ENCODE measurements at regions of chr9 and their contacts with region 1.

Region 1: DNA sequence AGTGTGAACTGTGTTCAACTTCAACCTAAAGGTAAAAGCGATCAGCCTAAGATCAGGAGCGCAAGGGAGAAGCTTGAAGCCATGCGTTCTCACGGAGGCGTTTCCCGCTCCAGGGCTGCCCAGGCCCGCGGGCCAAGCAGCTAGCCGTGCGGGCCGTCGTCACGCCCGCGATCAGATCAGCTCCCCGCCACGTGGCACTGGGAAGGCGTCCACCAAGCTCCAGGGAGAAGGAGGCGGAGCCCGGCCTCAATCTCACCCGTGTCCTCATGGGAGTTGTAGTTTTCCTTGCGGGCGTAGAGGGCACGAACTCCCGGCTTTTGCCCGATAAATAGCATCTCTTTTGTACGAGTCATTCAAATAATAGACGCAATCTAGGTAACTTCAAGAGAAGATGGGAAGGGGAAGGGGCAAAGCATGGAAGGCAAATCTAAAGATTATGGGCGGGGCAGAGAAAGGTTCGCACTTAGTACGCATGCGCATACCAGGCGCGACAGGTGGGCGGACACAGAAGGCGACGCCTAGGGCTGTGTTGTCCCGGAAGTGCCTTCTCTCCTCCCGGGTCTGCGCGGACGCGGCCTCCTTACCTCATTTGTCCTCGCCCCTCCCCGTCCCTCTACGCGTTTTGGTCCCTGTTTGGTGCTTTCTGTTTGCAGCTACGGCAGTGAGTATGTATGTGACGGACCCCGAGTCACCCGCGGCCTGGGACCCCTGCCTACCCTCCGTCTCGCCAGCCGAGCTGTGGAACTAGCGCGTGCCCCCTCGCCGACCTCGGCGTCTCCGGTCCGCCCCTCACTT is 40.8 kb upstream of the ZCCHC7 start:
- DNase-seq: peak; percentile 93
- ATAC-seq: peak; percentile 93
- H3K4me3 ChIP-seq: peak overlapping the region; percentile 84
- H3K27ac ChIP-seq: peak overlapping the region; percentile 87
- H3K4me1 ChIP-seq: peaks cover 20% of the 10 kb centered on the region
- H3K27me3 ChIP-seq: no peaks in the 10 kb centered on the region
- CTCF ChIP-seq: no peak
- EP300 ChIP-seq: no peak
- POLR2A ChIP-seq: peak; percentile 89
- RAD21 ChIP-seq: no peak

Region 2: DNA sequence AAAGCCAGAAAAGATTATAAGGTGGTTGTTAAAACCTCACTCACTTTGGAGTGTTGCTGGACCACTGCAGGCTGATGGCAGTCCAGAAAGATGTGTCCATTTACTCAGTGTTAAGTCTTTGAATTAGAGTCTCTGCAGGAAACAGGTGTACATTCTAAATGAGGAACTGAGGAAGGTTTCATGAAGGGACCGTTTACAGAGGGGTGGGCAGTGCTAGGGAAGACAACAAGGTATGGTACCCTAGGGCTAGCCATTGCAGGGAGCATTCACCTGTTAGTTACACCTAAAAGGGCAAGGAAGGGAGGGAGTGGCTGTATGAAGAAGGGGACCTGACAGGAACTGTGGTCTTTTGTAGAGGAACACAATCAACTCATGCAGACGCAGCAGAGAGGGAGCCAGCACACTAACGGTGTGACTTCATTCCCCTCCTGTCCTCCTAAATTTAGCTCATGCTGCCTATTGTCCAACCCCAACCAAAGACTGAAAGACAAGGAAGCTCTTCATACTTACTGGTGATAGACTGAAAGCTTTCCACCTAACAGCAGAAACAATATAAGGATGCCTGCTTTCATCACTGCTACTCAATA is 13.3 kb before region 1 on chr9:
- CTCF ChIA-PET with region 1: interaction called, 4 read pairs
- POLR2A ChIA-PET with region 1: interaction called, 6 read pairs
- RAD21 ChIA-PET with region 1: no interaction called
- SMC1A ChIA-PET with region 1: interaction called, 11 read pairs
- in situ Hi-C with region 1: no loop called
- intact Hi-C with region 1: no loop called
- DNase-seq: no peak
- ATAC-seq: peak; percentile 93
- H3K4me3 ChIP-seq: no peak overlapping the region
- H3K27ac ChIP-seq: peak overlapping the region; percentile 9; the same call in 1 of the 2 replicates
- H3K4me1 ChIP-seq: peaks cover 13% of the 10 kb centered on the region
- H3K27me3 ChIP-seq: no peaks in the 10 kb centered on the region
- CTCF ChIP-seq: no peak
- EP300 ChIP-seq: no peak
- POLR2A ChIP-seq: no peak
- RAD21 ChIP-seq: no peak

Region 3: DNA sequence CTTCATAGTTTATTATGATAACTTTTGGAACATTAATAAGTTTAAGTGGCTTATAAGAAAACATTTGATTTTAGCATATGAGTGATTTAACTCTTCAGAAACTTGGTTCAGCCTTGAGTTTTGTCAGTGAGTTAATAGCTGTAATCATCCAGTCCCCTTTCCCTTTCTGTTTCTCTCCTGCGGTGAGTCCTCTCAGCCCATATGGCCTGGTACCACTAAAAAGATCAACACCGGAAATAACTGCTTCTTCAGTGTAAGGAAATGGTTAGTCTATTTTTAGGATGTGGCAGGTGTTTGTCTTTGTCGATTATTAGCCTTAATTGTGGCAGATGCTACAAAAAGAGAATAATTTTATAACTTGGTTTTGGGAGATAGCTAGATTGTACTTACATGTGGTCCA is 222.7 kb after region 1 on chr9:
- CTCF ChIA-PET with region 1: interaction called, 3 read pairs
- POLR2A ChIA-PET with region 1: interaction called, 3 read pairs
- RAD21 ChIA-PET with region 1: no interaction called
- SMC1A ChIA-PET with region 1: interaction called, 4 read pairs
- in situ Hi-C with region 1: no loop called
- intact Hi-C with region 1: loop called (anchors 5 kb)
- DNase-seq: peak; percentile 90
- ATAC-seq: peak; percentile 91
- H3K4me3 ChIP-seq: peak overlapping the region; percentile 43; the same call in 1 of the 2 replicates
- H3K27ac ChIP-seq: peak overlapping the region; percentile 95
- H3K4me1 ChIP-seq: peaks cover 48% of the 10 kb centered on the region
- H3K27me3 ChIP-seq: no peaks in the 10 kb centered on the region
- CTCF ChIP-seq: no peak
- EP300 ChIP-seq: peak; percentile 82 to 93
- POLR2A ChIP-seq: no peak
- RAD21 ChIP-seq: peak; percentile 31; the same call in 1 of the 2 replicates

Region 4: GRCh38 chr9:37503736-37504135 is 424.2 kb after region 1 on chr9:
- CTCF ChIA-PET with region 1: no interaction called
- POLR2A ChIA-PET with region 1: no interaction called
- RAD21 ChIA-PET with region 1: no interaction called
- SMC1A ChIA-PET with region 1: no interaction called
- in situ Hi-C with region 1: no loop called
- intact Hi-C with region 1: no loop called
- DNase-seq: no peak
- ATAC-seq: peak; percentile 56
- H3K4me3 ChIP-seq: no peak overlapping the region
- H3K27ac ChIP-seq: no peak overlapping the region
- H3K4me1 ChIP-seq: no peaks in the 10 kb centered on the region
- H3K27me3 ChIP-seq: no peaks in the 10 kb centered on the region
- CTCF ChIP-seq: no peak
- EP300 ChIP-seq: no peak
- POLR2A ChIP-seq: 0 out of 2 replicates have a peak, but pooled peaks have one; percentile 31
- RAD21 ChIP-seq: no peak

Region 5: DNA sequence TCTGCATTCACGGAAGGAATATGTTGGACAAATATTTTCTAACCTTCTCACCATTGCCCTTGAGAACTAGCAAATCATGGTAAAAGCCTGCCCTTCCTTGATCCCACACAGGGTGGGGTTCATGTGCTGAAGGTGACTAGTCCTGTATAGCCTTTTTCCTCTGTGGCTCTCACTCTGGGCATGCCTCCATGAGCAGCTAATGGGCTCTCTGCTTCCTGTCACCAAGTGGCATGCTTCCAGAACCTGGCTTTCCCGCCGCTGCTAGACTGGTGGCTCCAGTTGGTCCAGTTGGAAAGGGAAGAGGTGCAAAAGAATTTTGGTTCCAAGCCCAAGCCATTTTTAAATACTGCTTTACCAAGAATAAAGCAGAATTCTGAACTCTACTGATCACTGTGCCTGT is 461.1 kb after region 1 on chr9:
- CTCF ChIA-PET with region 1: no interaction called
- POLR2A ChIA-PET with region 1: no interaction called
- RAD21 ChIA-PET with region 1: no interaction called
- SMC1A ChIA-PET with region 1: no interaction called
- in situ Hi-C with region 1: no loop called
- intact Hi-C with region 1: no loop called
- DNase-seq: no peak
- ATAC-seq: no peak
- H3K4me3 ChIP-seq: no peak overlapping the region
- H3K27ac ChIP-seq: no peak overlapping the region
- H3K4me1 ChIP-seq: no peaks in the 10 kb centered on the region
- H3K27me3 ChIP-seq: no peaks in the 10 kb centered on the region
- CTCF ChIP-seq: no peak
- EP300 ChIP-seq: no peak
- POLR2A ChIP-seq: no peak
- RAD21 ChIP-seq: no peak

Measured in GM12878 (cell line).